Transverse colon (tissue), 4 donors: ENCODE measurements at regions of chr6 and their contacts with region 1.

Region 1: DNA sequence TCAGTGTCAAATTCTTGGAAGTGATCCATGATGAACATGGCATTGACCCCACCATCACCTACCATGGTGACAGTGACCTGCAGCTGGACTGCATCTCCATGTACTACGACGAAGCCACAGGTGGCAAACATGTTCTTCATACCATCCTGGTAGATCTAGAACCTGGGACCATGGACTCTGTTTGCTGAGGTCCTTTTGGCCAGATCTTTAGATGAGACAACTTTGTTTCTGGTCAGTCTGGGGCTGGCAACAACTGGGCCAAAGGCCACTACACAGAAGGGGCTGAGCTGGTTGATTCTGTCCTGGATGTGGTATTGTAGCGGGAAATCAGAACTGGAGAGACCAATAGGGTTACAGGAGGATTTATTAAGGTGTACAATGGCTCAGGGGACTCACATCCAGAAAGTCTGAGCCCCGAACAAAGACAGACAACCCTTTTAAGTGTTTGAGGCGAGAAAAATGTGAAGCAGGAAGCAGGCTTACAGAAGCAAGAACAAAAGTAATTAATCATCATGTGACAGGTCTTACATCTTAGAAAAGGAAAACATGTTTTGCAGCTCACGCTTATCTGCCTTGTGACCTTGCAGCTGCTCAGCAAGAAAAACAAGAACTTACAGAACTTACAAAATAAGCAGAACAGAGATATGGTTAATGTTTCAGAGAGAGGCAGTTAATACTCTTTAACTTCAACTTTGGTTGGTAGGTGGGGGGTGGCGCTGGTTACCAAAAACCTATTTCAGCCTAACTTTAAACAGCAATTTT is 58.8 kb upstream of the MOCS1 start:
- DNase-seq: no peak
- H3K4me3 ChIP-seq: no peak overlapping the region
- H3K27ac ChIP-seq: no peak overlapping the region
- H3K4me1 ChIP-seq: peaks cover 0 to 13% (median 7%) of the 10 kb centered on the region in 4 donors
- H3K27me3 ChIP-seq: no peaks in the 10 kb centered on the region
- CTCF ChIP-seq: no peak
- EP300 ChIP-seq: no peak
- POLR2A ChIP-seq: no peak

Region 2: DNA sequence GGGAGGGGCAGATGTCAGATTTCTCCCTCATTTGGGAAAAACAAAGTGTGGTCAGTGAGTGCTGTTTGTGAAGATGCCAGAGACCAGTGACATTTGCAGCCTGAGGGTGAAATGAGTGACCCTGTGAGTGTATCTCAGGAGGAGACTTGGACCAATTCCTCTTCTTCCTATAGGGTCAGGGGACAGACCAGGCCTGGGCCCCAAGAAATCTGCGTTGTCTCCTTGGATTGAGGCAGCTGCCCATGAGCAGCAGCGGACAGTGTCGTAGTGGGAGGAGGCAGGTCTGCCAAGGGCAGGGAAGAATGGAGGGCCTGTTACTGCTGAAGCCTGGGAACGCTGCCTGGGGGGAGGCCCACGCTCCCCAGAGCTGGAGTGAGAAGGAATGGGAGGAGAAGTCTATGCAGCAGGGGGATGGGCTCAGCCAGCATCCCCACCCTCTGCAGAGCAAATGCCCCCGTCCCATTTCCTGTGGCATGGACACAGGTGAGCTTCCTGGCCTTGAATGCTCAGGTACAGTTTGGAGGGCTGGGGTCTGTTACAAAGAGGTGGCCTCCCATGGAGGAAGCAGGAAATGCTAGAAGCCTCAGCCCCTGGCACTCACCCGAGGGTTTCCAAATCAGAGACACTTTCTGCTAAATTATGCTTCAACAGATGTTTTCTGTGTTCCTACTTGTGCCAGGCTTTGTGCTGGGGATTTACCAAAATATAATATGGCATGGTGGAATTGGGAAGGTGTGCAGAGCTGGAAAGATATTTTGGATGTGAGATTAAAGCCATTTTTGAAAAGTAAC is 171.1 kb before region 1 on chr6:
- in situ Hi-C with region 1: no loop called
- intact Hi-C with region 1: no loop called
- DNase-seq: no peak
- H3K4me3 ChIP-seq: peak overlapping the region in 1 of 4 donors; percentile 18
- H3K27ac ChIP-seq: peak overlapping the region; percentile 77 to 83 (median 79)
- H3K4me1 ChIP-seq: peaks cover 0 to 50% (median 16%) of the 10 kb centered on the region in 4 donors
- H3K27me3 ChIP-seq: no peaks in the 10 kb centered on the region
- CTCF ChIP-seq: no peak
- EP300 ChIP-seq: no peak
- POLR2A ChIP-seq: no peak

Region 3: GRCh38 chr6:40011844-40012243 is 18.8 kb after region 1 on chr6:
- in situ Hi-C with region 1: no loop called
- intact Hi-C with region 1: no loop called
- DNase-seq: no peak
- H3K4me3 ChIP-seq: no peak overlapping the region
- H3K27ac ChIP-seq: no peak overlapping the region
- H3K4me1 ChIP-seq: no peaks in the 10 kb centered on the region
- H3K27me3 ChIP-seq: no peaks in the 10 kb centered on the region
- CTCF ChIP-seq: no peak
- EP300 ChIP-seq: no peak
- POLR2A ChIP-seq: no peak

Region 4: GRCh38 chr6:40028449-40028848 is 35.4 kb after region 1 on chr6:
- in situ Hi-C with region 1: no loop called
- intact Hi-C with region 1: loop called (anchors 1 kb)
- DNase-seq: no peak
- H3K4me3 ChIP-seq: no peak overlapping the region
- H3K27ac ChIP-seq: no peak overlapping the region
- H3K4me1 ChIP-seq: no peaks in the 10 kb centered on the region
- H3K27me3 ChIP-seq: no peaks in the 10 kb centered on the region
- CTCF ChIP-seq: no peak
- EP300 ChIP-seq: no peak
- POLR2A ChIP-seq: no peak

Region 5: DNA sequence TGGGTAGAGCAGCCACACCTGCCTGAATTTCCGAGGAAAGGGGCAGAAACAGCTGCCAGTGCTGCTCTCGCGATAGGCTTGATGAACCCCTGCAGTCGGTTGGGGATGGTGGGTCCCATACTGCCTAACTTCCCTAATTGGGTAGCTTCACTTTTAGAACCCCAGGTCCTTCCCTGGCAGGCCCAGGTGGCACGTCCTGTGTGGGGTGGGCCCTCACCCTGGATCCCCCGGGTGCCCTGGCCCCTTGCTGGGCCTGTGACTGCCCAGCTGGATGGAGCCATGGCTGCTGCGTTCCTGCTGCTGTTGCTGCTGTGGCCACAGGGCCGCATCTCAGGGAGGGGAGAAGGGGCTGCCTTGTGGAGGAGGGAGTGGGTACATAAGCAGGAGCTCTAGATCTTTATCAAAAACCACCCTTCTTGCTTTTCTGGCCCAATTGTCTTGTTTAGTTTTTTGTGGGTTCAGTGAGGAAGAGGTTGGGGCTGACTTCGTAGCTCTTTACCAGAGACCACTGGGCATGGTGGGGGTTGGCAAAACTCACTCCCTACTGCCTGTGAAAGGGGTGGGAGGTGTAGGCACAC is 1254.3 kb after region 1 on chr6:
- in situ Hi-C with region 1: no loop called
- intact Hi-C with region 1: no loop called
- DNase-seq: no peak
- H3K4me3 ChIP-seq: no peak overlapping the region
- H3K27ac ChIP-seq: no peak overlapping the region
- H3K4me1 ChIP-seq: no peaks in the 10 kb centered on the region
- H3K27me3 ChIP-seq: peaks cover under 1% of the 10 kb centered on the region
- CTCF ChIP-seq: no peak
- EP300 ChIP-seq: no peak
- POLR2A ChIP-seq: no peak